Pancreas (tissue), 10 donors: ENCODE measurements at regions of chr3 and their contacts with region 1.

Region 1: DNA sequence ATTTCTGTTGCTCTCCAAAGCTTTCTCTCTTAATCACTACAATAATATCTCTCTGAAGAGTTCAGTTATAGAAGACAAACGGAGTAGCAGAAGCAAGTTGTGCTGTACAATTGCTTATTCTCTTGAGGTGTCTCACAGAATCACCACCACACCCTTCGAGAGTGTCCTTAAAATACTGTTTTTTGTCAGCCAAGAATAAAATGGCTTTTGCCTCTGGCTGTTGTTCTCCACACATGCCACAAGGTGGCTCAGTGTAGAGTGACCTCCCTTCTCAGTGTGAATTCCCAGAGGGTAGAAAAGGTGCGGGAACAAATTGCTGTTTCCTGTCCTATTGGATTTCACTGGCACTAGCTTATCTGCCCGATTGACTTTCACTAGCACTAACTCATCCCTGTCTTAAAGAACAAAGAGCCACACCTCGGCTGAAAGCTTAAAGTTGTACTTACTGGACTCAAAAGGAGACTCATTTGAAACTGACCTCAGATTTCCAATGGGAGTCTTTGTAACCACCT is 134.2 kb upstream of the SATB1 start:
- DNase-seq: peak in 3 of 6 donors; percentile 19 to 53 (median 34)
- ATAC-seq: peak; percentile 81 to 97 (median 96)
- H3K4me3 ChIP-seq: no peak overlapping the region
- H3K27ac ChIP-seq: no peak overlapping the region
- H3K4me1 ChIP-seq: peaks cover 0 to 3% (median 0%) of the 10 kb centered on the region in 3 donors
- H3K27me3 ChIP-seq: no peaks in the 10 kb centered on the region
- CTCF ChIP-seq: peak; percentile 65 to 72 (median 70)

Region 2: DNA sequence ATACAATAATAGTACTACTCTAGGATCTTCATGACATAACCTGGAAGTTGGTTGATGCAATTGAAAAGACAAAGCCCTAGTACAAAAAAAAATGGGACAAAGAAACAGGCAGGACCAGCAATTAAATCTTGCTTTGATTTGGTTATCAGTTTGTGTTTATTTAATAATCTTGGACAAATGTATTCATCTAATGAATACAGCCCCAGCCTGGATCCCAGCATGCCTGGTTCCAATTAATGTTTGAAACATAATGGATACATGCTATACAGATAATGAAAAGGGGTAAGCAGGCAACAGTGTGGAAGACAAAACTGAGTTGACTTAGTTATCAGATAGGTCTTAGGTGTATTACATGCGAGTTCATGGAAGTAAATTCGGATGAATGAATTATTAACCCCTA is 104.6 kb before region 1 on chr3:
- intact Hi-C with region 1: no loop called
- DNase-seq: no peak
- ATAC-seq: no peak
- H3K4me3 ChIP-seq: no peak overlapping the region
- H3K27ac ChIP-seq: no peak overlapping the region
- H3K4me1 ChIP-seq: no peaks in the 10 kb centered on the region
- H3K27me3 ChIP-seq: peaks cover 0 to 2% (median 0%) of the 10 kb centered on the region in 4 donors
- CTCF ChIP-seq: no peak

Region 3: DNA sequence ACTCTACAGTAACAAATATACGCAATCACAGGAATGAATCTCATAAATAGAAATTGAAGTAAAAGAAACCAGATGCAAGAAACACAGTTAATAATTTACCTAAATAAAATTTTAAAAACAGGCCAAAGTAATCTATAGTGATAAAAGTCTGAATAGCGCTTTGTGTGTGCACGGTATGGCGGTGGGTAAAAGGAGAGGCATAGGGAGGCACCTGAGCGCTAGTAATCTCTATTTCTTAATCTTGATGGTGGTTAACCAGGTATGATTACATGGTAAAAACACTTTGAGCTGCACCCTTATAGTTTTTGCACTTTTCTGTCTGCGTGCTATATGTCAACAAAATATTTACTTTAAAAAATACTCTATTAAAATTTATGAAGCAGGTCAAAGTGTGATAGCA is 63.8 kb after region 1 on chr3:
- intact Hi-C with region 1: no loop called
- DNase-seq: no peak
- ATAC-seq: no peak
- H3K4me3 ChIP-seq: no peak overlapping the region
- H3K27ac ChIP-seq: no peak overlapping the region
- H3K4me1 ChIP-seq: no peaks in the 10 kb centered on the region
- H3K27me3 ChIP-seq: no peaks in the 10 kb centered on the region
- CTCF ChIP-seq: no peak

Region 4: DNA sequence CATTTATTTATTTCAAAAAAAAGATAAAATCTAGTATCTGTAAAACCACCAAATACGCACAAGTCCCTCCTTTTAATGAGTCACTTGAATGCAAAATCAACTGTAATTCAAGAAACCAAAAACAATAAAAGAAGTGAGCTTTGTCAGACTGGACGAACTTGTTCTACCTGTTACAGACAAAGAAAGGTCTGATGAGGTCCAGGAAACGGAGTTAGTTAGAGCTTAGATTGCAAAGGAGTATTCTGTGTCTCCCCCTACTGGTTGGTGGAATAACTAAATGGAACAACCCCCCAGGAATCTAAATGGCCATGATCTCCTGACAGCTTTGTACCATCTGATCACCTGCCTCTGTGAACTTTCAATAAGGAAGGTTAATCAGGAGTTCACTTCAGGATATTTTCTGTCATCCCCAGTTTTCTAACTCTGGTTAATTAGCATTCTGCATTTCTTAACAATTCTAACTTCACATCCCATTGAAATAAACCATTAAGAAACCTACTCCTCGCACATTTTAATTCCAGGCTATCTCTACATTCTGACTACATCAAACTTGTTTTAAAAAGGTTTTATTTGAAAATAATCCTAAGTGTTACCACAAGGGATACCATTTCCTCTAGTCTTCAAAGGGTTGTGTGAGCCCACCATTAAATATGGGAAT is 198.8 kb after region 1 on chr3:
- intact Hi-C with region 1: loop called in 2 of 3 experiments (anchors 10 kb)
- DNase-seq: peak in 3 of 6 donors; percentile 37 to 54 (median 52)
- ATAC-seq: peak; percentile 97 to 100 (median 99)
- H3K4me3 ChIP-seq: no peak overlapping the region
- H3K27ac ChIP-seq: peak overlapping the region in 2 of 4 donors; percentile 16 to 45
- H3K4me1 ChIP-seq: peaks cover 0 to 9% (median 8%) of the 10 kb centered on the region in 3 donors
- H3K27me3 ChIP-seq: no peaks in the 10 kb centered on the region
- CTCF ChIP-seq: peak; percentile 57 to 73 (median 68)

Region 5: GRCh38 chr3:18766974-18767373 is 207.6 kb after region 1 on chr3:
- intact Hi-C with region 1: loop called in 1 of 3 experiments (anchors 10 kb)
- DNase-seq: no peak
- ATAC-seq: no peak
- H3K4me3 ChIP-seq: no peak overlapping the region
- H3K27ac ChIP-seq: no peak overlapping the region
- H3K4me1 ChIP-seq: no peaks in the 10 kb centered on the region
- H3K27me3 ChIP-seq: no peaks in the 10 kb centered on the region
- CTCF ChIP-seq: no peak

Region 6: GRCh38 chr3:18998069-18998468 is 438.7 kb after region 1 on chr3:
- intact Hi-C with region 1: loop called in 1 of 3 experiments (anchors 10 kb)
- DNase-seq: no peak
- ATAC-seq: no peak
- H3K4me3 ChIP-seq: no peak overlapping the region
- H3K27ac ChIP-seq: no peak overlapping the region
- H3K4me1 ChIP-seq: no peaks in the 10 kb centered on the region
- H3K27me3 ChIP-seq: no peaks in the 10 kb centered on the region
- CTCF ChIP-seq: no peak